Heart right ventricle (tissue), 16 donors: ENCODE measurements at regions of chr10 and their contacts with region 1.

Region 1: DNA sequence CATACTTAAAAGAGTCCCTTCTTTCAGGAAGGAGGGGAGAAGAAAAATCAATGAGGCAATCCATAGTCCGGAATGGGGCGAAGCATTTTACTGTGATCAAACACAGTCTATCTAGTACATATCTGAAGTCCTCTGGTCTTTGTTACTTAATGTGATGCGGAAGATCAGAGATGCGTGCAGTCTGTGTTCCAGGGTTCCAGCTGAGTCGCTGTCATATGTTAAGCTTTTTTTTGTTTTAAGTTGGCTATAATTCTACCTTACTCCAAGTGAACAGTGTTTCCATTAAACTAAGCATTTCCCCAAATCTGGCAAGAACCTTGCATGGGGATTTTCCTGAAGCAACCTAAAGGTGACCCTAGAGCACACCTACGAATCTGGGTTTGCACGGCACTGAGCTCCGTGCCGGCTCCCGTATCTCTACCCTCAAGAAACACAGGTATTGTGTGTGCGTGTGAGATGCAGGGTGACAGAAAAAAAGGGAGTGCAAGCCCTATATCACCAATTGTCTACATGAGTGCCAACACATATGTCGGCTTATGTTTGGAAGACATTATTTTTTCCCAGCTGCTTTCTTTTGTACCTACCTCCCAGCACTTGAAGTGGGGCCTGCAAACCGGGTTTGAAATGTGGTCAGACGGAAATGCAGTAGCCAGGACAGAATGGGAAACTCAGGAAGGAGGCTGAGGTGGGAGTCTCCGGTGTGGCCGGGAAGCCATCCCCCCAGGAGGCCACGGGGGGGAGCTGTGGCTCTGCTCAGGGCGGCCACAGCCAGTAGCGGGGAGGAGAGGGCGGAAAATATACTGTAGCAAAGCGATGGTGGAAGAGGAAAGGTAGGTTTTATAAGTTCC is 435.8 kb upstream of the MGMT start:
- DNase-seq: peak; percentile 45 to 68
- ATAC-seq: peak; percentile 72 to 93 (median 92)
- H3K4me3 ChIP-seq: no peak overlapping the region
- H3K27ac ChIP-seq: no peak overlapping the region
- H3K4me1 ChIP-seq: peaks cover 0 to 20% (median 3%) of the 10 kb centered on the region in 9 donors
- H3K27me3 ChIP-seq: peaks cover 0 to 70% (median 22%) of the 10 kb centered on the region in 7 donors
- CTCF ChIP-seq: peak; percentile 82 to 97 (median 93)

Region 2: GRCh38 chr10:128451879-128452278 is 579.3 kb before region 1 on chr10:
- intact Hi-C with region 1: no loop called
- DNase-seq: no peak
- ATAC-seq: no peak
- H3K4me3 ChIP-seq: no peak overlapping the region
- H3K27ac ChIP-seq: no peak overlapping the region
- H3K4me1 ChIP-seq: no peaks in the 10 kb centered on the region
- H3K27me3 ChIP-seq: peaks cover 0 to 6% (median 0%) of the 10 kb centered on the region in 7 donors
- CTCF ChIP-seq: no peak

Region 3: DNA sequence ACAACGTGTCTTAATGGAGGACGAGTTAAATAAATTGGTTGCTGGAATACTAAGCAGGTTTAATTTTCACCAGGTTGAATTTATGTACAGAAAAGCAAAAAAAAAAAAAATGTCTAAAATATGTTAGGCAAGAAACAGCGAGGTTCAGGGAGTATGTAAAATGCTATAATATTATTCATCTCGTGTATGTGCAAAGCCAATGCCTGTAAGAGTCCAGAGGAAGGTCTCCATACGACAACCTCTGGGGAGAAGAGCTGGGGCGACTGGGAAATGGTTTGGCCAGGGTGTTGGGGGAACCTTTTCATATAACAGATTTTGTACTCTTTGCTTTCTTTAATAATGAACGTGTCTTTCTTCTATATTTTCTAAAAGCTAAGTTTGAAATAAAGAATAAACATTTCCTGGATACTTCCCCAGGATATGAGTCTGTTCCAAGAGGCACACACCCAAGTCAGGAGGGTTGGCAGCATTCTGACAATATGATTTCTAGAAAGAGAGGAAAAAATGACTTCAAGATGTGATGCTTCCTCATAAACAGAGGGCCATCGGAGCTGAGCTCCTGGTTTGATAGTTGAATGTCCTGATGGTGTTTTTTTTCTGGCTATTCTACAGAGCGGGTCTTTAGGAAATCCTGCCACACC is 227.2 kb after region 1 on chr10:
- intact Hi-C with region 1: loop called in 1 of 10 experiments (anchors 10 kb)
- DNase-seq: peak in 1 of 2 donors; percentile 17
- ATAC-seq: peak in 7 of 8 donors; percentile 38 to 77 (median 62)
- H3K4me3 ChIP-seq: peak overlapping the region in 1 of 10 donors; percentile 2
- H3K27ac ChIP-seq: peak overlapping the region in 8 of 10 donors; percentile 1 to 70 (median 47)
- H3K4me1 ChIP-seq: peaks cover 0 to 22% (median 6%) of the 10 kb centered on the region in 9 donors
- H3K27me3 ChIP-seq: no peaks in the 10 kb centered on the region
- CTCF ChIP-seq: no peak

Region 4: GRCh38 chr10:129332476-129332875 is 301.3 kb after region 1 on chr10:
- intact Hi-C with region 1: loop called in 8 of 10 experiments (anchors 2 to 10 kb)
- DNase-seq: no peak
- ATAC-seq: no peak
- H3K4me3 ChIP-seq: no peak overlapping the region
- H3K27ac ChIP-seq: no peak overlapping the region
- H3K4me1 ChIP-seq: peaks cover 0 to 8% (median 0%) of the 10 kb centered on the region in 9 donors
- H3K27me3 ChIP-seq: peaks cover 0 to 9% (median 5%) of the 10 kb centered on the region in 7 donors
- CTCF ChIP-seq: peak in 8 of 9 donors; percentile 22 to 64 (median 52)

Region 5: GRCh38 chr10:129416956-129417765 is 385.9 kb after region 1 on chr10:
- intact Hi-C with region 1: loop called in 1 of 10 experiments (anchors 10 kb)
- DNase-seq: no peak
- ATAC-seq: peak in 7 of 8 donors; percentile 47 to 80 (median 62)
- H3K4me3 ChIP-seq: no peak overlapping the region
- H3K27ac ChIP-seq: peak overlapping the region in 7 of 10 donors; percentile 8 to 53 (median 26)
- H3K4me1 ChIP-seq: peaks cover 0 to 39% (median 11%) of the 10 kb centered on the region in 9 donors
- H3K27me3 ChIP-seq: peaks cover 0 to 14% (median 7%) of the 10 kb centered on the region in 7 donors
- CTCF ChIP-seq: no peak

Region 6: GRCh38 chr10:129888784-129889616 is 857.8 kb after region 1 on chr10:
- intact Hi-C with region 1: loop called in 1 of 10 experiments (anchors 5 kb)
- DNase-seq: peak; percentile 67 to 76
- ATAC-seq: peak; percentile 58 to 80 (median 74)
- H3K4me3 ChIP-seq: no peak overlapping the region
- H3K27ac ChIP-seq: peak overlapping the region in 3 of 10 donors; percentile 24 to 51 (median 44)
- H3K4me1 ChIP-seq: peaks cover 11 to 69% (median 37%) of the 10 kb centered on the region in 9 donors
- H3K27me3 ChIP-seq: no peaks in the 10 kb centered on the region
- CTCF ChIP-seq: peak; percentile 53 to 83 (median 74)

Region 7: GRCh38 chr10:130110246-130111112 is 1079.3 kb after region 1 on chr10 and contains the start of gene C10orf143:
- intact Hi-C with region 1: loop called in 3 of 10 experiments (anchors 5 to 10 kb)
- DNase-seq: peak; percentile 98 to 99
- ATAC-seq: peak; percentile 95 to 99 (median 96)
- H3K4me3 ChIP-seq: peak within 1 kb of the TSS; percentile 71 to 93 (median 78)
- H3K27ac ChIP-seq: peak within 1 kb of the TSS; percentile 84 to 98 (median 92)
- H3K4me1 ChIP-seq: peaks cover 0 to 37% (median 25%) of the 10 kb centered on the region in 9 donors
- H3K27me3 ChIP-seq: no peaks in the 10 kb centered on the region
- CTCF ChIP-seq: peak in 1 of 9 donors; percentile 11
- total RNA-seq, gene C10orf143: 1.1 to 2.9 (median 2.1) TPM

Region 8: DNA sequence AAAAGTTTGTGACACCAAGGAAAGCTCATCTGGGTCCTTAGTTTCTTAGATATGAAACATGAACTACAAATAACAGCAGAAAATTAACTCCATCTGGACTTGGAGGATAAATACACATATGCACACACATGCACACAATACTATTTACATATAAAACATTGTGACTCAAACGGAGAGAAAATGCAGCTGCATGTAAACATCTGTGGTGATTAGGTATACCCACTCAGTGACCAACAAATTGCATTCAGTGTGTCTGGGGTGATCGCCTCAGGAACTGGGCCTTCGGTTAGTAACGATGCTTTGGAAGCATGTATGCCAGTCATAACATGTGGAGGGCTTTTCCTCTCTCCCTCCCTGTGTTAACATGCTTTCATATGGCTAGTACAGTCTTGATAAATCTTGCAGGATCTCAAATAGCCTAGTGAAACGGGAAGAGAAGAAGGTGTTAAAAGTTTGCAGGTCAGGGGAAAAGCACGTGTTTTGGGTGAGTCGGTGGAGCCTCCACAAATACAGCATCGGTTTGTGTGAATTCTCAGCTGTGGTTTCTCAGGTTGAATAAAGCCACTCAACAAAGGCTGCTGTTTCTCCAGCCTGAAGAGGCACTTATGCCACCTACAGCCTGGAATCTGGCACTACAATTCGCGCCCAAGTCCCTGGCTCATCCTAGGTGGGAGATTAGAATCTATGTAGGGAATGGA is 1096.3 kb after region 1 on chr10:
- intact Hi-C with region 1: loop called in 3 of 10 experiments (anchors 5 kb)
- DNase-seq: peak in 1 of 2 donors; percentile 29
- ATAC-seq: peak in 7 of 8 donors; percentile 52 to 85 (median 80)
- H3K4me3 ChIP-seq: no peak overlapping the region
- H3K27ac ChIP-seq: no peak overlapping the region
- H3K4me1 ChIP-seq: peaks cover 0 to 12% (median 0%) of the 10 kb centered on the region in 9 donors
- H3K27me3 ChIP-seq: peaks cover 0 to 27% (median 12%) of the 10 kb centered on the region in 7 donors
- CTCF ChIP-seq: peak; percentile 45 to 81 (median 69)